Transverse colon (tissue), 4 donors: ENCODE measurements at regions of chr1 and their contacts with region 1.

Region 1: GRCh38 chr1:243513726-243514491 is 258.1 kb downstream of the SDCCAG8 start:
- DNase-seq: no peak
- H3K4me3 ChIP-seq: no peak overlapping the region
- H3K27ac ChIP-seq: no peak overlapping the region
- H3K4me1 ChIP-seq: no peaks in the 10 kb centered on the region
- H3K27me3 ChIP-seq: no peaks in the 10 kb centered on the region
- CTCF ChIP-seq: no peak
- EP300 ChIP-seq: no peak
- POLR2A ChIP-seq: no peak

Region 2: GRCh38 chr1:243471754-243472745 is 41.9 kb before region 1 on chr1:
- in situ Hi-C with region 1: no loop called
- intact Hi-C with region 1: no loop called
- DNase-seq: no peak
- H3K4me3 ChIP-seq: no peak overlapping the region
- H3K27ac ChIP-seq: no peak overlapping the region
- H3K4me1 ChIP-seq: peaks cover 0 to 12% (median 2%) of the 10 kb centered on the region in 4 donors
- H3K27me3 ChIP-seq: no peaks in the 10 kb centered on the region
- CTCF ChIP-seq: no peak
- EP300 ChIP-seq: no peak
- POLR2A ChIP-seq: no peak

Region 3: DNA sequence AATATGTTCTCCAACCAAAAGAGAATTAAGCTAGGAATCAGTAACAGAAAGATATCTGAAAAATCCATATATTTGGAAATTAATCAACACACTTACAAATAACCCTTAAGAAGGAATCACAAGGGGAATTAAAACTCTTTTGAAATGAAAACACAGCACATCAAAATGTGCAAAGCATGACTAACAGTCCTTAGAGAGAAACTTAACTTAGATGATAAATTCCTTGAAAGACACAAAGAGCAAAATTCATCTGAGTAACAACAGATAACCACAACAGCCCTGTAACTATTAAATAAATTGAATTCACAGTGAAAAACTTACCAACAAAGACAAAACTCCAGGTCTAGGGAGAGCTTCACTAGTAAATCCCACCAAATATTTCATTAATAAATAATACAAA is 25.7 kb after region 1 on chr1:
- in situ Hi-C with region 1: no loop called
- intact Hi-C with region 1: loop called (anchors 1 kb)
- DNase-seq: no peak
- H3K4me3 ChIP-seq: no peak overlapping the region
- H3K27ac ChIP-seq: no peak overlapping the region
- H3K4me1 ChIP-seq: no peaks in the 10 kb centered on the region
- H3K27me3 ChIP-seq: no peaks in the 10 kb centered on the region
- CTCF ChIP-seq: no peak
- EP300 ChIP-seq: no peak
- POLR2A ChIP-seq: no peak

Region 4: DNA sequence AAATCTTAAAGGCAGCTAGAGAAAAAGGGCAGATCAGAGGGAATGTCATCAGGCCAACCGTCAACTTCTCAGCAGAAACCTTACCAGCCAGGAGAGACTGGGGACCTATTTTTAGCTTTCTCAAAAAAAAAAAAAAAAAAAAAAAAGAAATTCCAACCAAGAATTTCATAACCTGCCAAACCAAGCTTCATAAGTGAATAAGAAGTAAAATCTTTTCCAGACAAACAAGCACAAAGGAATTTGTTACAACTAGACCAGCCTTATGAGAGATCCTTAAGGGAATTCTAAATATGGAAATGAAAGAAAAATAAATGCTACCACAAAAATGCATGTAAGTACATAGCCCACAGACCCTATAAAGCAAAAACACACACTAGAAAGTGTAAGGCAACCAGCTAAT is 68.4 kb after region 1 on chr1:
- in situ Hi-C with region 1: no loop called
- intact Hi-C with region 1: no loop called
- DNase-seq: no peak
- H3K4me3 ChIP-seq: no peak overlapping the region
- H3K27ac ChIP-seq: no peak overlapping the region
- H3K4me1 ChIP-seq: no peaks in the 10 kb centered on the region
- H3K27me3 ChIP-seq: no peaks in the 10 kb centered on the region
- CTCF ChIP-seq: no peak
- EP300 ChIP-seq: no peak
- POLR2A ChIP-seq: no peak

Region 5: DNA sequence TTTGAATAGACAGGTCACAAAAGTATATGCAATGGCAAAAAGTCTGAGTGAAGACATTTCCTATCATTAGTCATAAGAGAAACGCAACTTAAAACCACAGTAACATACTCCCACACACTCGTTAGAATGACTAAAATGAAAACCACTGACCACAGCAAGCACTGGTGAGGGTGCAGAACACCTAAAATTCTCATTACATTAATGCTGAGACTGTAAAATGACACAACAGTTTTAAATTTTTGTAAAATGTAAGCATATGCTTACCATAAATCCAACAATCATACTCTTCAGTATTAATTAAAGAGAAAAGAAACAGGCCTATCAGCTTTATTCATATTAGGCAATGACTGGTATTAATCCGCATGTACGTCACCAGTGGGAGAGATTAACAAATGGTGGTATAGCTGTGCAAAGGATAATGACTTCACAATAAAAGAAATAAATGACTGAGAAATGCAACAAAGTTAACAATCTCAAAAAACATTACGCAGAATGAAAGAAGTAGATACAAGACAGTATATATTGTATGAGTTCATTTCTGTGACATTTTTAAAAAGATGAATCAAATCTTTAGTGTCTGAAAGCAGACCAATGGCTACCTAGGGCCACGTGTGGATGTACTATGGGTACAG is 82.6 kb after region 1 on chr1:
- in situ Hi-C with region 1: no loop called
- intact Hi-C with region 1: no loop called
- DNase-seq: no peak
- H3K4me3 ChIP-seq: no peak overlapping the region
- H3K27ac ChIP-seq: no peak overlapping the region
- H3K4me1 ChIP-seq: no peaks in the 10 kb centered on the region
- H3K27me3 ChIP-seq: no peaks in the 10 kb centered on the region
- CTCF ChIP-seq: no peak
- EP300 ChIP-seq: no peak
- POLR2A ChIP-seq: no peak